Heart left ventricle (tissue), 16 donors: ENCODE measurements at regions of chr12 and their contacts with region 1.

Region 1: GRCh38 chr12:94101738-94102660 is 46.4 kb upstream of the PLXNC1 start:
- DNase-seq: peak; percentile 83 to 91 (median 85)
- ATAC-seq: peak; percentile 80 to 91 (median 88)
- H3K4me3 ChIP-seq: peak overlapping the region; percentile 41 to 81 (median 70)
- H3K27ac ChIP-seq: peak overlapping the region in 11 of 12 donors; percentile 48 to 82 (median 61)
- H3K4me1 ChIP-seq: peaks cover 0 to 17% (median 10%) of the 10 kb centered on the region in 12 donors
- H3K27me3 ChIP-seq: peaks cover 0 to 4% (median 0%) of the 10 kb centered on the region in 9 donors
- CTCF ChIP-seq: peak; percentile 76 to 90 (median 80)
- POLR2A ChIP-seq: no peak

Region 2: DNA sequence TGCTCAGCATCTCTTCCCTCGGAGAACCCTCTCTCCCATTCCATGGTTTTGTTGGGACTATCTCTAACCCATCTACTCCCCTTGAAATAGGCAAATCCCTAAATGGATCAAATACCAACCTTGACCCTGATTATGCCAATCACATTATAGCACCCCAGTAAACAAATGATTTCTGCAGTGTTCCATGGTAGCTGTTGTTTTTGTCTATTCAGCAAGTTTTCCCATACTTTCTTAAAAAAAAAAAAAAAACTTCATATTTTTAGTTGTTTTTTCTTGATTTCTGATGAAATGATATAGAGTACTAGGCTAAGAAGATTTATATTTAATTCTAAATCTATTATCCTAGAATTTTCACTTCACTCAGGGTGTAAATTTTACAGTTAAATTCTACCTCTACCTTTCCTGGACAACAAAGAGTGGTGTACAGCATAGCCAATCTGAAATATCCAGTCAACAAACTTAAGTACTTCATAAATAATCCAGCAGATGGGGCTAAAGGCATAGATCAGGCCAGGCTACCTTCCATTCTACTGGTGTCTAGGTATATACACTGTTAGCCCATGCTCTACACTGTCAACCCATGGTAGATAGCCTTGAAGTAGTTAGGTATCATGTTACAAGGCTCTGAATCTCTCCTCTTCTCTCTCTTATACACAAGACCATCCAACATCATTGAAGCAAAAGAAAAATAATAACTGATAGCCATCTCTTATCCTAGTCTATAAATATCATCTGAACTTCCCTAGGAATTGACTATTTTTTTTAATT is 1317.0 kb before region 1 on chr12:
- intact Hi-C with region 1: loop called in 1 of 10 experiments (anchors 5 kb)
- DNase-seq: peak in 1 of 5 donors; percentile 14
- ATAC-seq: peak; percentile 83 to 95 (median 93)
- H3K4me3 ChIP-seq: no peak overlapping the region
- H3K27ac ChIP-seq: peak overlapping the region in 1 of 12 donors; percentile 4
- H3K4me1 ChIP-seq: peaks cover 0 to 25% (median 10%) of the 10 kb centered on the region in 12 donors
- H3K27me3 ChIP-seq: no peaks in the 10 kb centered on the region
- CTCF ChIP-seq: peak; percentile 38 to 70 (median 60)
- POLR2A ChIP-seq: no peak

Region 3: GRCh38 chr12:93502802-93503623 is 599.0 kb before region 1 on chr12:
- intact Hi-C with region 1: loop called (anchors 2 to 5 kb)
- DNase-seq: peak in 2 of 5 donors; percentile 33 to 39
- ATAC-seq: peak in 1 of 4 donors; percentile 28
- H3K4me3 ChIP-seq: no peak overlapping the region
- H3K27ac ChIP-seq: no peak overlapping the region
- H3K4me1 ChIP-seq: peaks cover 0 to 11% (median 0%) of the 10 kb centered on the region in 12 donors
- H3K27me3 ChIP-seq: no peaks in the 10 kb centered on the region
- CTCF ChIP-seq: peak; percentile 66 to 87 (median 81)
- POLR2A ChIP-seq: no peak

Region 4: DNA sequence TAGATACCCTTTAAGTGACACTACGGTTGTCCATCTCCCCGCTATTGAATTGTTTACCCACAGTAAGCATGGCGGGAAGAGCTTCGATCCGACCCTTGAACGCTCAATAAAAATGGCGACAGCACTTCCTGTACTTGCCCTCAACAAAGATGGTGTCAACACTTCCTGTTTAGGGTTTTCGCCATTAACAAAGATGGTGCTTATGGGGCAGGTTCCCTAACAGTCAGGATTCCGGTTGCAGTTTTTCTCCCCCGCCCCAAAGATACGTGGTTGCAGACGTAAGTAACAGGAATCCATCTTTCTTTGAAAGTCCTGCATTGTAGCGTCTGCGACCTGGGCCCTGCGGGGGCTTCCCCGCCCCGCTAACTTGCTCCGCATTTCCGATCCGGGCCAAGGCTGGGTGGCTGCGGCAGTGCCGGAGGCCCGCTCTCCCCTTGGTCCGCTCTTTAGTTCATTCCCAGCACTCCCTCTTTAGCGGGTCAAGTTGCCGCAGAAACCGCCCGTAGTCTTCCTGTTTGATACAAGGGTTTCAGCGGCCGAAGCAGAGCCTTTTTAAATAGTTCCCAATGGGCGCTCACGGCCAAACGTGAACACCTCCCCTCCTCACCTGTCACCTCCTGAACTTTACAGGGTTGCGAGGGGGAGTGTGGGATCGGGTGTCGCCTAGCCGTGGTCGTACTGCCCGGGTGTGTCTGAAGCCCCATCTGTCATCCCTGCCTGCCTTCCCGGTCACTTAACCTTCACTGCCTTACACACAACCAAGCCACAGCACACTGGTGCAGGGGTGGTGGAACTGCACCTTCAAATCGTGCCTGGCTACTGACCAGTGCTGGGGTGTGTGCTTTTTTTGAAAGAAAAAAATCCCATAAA is 424.6 kb before region 1 on chr12 and contains the start of gene CRADD:
- intact Hi-C with region 1: loop called in 5 of 10 experiments (anchors 5 to 10 kb)
- DNase-seq: peak; percentile 79 to 90 (median 83)
- ATAC-seq: peak; percentile 86 to 94 (median 92)
- H3K4me3 ChIP-seq: peak within 1 kb of the TSS; percentile 36 to 84 (median 70)
- H3K27ac ChIP-seq: peak within 1 kb of the TSS; percentile 84 to 100 (median 97)
- H3K4me1 ChIP-seq: peaks cover 0 to 52% (median 24%) of the 10 kb centered on the region in 12 donors
- H3K27me3 ChIP-seq: no peaks in the 10 kb centered on the region
- CTCF ChIP-seq: no peak
- POLR2A ChIP-seq: peak in 1 of 2 donors; percentile 73
- total RNA-seq, gene CRADD: 40.1 to 100 (median 56.1) TPM

Region 5: DNA sequence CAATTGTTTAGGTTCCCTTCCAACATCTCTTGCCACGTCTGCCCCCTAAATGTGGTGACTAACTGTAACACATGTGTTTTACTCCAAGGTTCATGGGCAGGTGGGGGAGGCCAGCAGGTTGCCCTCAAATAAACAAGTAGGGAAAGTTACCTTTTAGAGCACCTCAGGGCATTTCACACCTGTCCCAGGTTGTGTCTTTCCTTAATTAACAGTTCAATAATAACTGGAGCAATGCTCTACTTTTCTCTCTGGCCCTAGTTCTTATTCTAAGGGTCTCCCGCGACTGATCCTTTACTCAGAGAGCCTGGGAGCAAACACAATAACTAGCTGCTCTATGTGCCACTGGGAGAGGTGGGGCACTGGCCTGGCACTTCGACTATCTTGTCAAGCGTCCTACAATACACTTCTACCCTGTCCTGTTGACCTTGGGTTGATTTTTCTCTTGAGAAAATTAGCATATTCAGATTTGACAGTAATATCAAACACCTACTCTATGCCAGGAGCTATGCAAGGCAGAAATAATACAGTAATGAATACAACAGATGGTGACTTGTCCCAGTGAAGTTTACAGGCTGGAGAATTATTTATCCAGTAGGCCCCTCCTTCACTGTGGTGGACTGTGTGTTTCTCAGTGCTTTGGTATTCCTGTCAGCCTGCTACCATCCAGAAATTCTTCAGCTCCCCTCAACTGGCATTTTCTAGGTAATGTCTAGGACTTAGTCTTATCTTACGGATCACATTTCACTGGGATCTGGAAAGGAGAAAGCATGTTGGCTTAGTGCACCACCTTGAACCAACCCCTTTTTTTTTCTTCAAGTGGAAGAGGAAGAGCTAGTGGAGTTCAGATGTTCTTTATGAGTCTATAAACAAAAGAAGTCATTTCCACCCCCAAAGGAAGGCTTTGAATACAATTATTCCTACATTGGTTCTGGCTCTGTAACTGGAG is 222.2 kb before region 1 on chr12:
- intact Hi-C with region 1: loop called in 1 of 10 experiments (anchors 10 kb)
- DNase-seq: no peak
- ATAC-seq: peak; percentile 51 to 79 (median 60)
- H3K4me3 ChIP-seq: no peak overlapping the region
- H3K27ac ChIP-seq: peak overlapping the region in 7 of 12 donors; percentile 4 to 36 (median 21)
- H3K4me1 ChIP-seq: peaks cover 0 to 26% (median 16%) of the 10 kb centered on the region in 12 donors
- H3K27me3 ChIP-seq: no peaks in the 10 kb centered on the region
- CTCF ChIP-seq: no peak
- POLR2A ChIP-seq: no peak

Region 6: DNA sequence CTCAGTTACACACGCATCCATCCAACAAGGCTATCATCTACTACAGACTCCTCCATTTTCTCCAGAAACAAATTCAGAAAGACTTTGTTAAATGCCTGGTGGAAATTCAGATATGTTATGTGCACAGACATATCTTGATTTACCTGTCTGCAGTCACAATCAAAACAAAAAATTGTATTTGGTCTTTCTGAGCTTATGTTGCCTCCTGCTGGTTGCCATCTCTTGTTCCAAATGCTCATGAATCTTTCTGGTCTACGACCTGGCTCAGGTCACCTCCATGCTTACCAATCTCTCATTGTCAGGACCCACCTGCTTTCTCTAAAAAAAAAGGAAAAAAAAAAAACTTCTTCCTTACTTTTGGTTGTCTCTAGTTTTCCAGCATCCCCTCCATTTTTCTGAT is 122.8 kb before region 1 on chr12:
- intact Hi-C with region 1: loop called in 2 of 10 experiments (anchors 5 to 10 kb)
- DNase-seq: no peak
- ATAC-seq: peak in 2 of 4 donors; percentile 36
- H3K4me3 ChIP-seq: no peak overlapping the region
- H3K27ac ChIP-seq: peak overlapping the region in 1 of 12 donors; percentile 7
- H3K4me1 ChIP-seq: peaks cover 0 to 16% (median 5%) of the 10 kb centered on the region in 12 donors
- H3K27me3 ChIP-seq: no peaks in the 10 kb centered on the region
- CTCF ChIP-seq: peak; percentile 26 to 73 (median 58)
- POLR2A ChIP-seq: no peak

Region 7: GRCh38 chr12:94089891-94090290 is 12.1 kb before region 1 on chr12:
- intact Hi-C with region 1: no loop called
- DNase-seq: no peak
- ATAC-seq: no peak
- H3K4me3 ChIP-seq: no peak overlapping the region
- H3K27ac ChIP-seq: no peak overlapping the region
- H3K4me1 ChIP-seq: peaks cover 0 to 3% (median 0%) of the 10 kb centered on the region in 12 donors
- H3K27me3 ChIP-seq: no peaks in the 10 kb centered on the region
- CTCF ChIP-seq: no peak
- POLR2A ChIP-seq: no peak